IMR-90 (cell line): ENCODE measurements at regions of chr15 and their contacts with region 1.

Region 1: DNA sequence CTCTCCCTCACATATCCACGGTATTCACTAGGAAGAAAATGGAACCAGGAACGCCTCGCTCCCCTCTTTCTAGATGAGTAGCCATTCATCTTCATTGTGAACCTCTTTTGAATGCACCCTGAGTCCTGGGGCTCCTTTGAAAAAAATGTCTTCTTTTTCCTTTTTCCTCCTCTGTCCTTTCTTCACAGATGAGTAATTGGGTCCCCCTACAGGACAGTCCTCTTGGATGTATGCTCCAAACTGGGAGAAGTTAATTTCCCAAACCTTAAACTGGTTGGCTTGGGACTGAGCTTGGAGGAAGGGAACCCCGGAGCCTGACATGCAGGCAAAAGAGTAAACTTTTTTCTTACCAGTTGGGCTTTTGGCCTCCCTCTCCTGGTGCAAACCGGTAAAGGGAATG is 108.8 kb downstream of the DPH6 start:
- DNase-seq: peak; percentile 23
- ATAC-seq: peak; percentile 44
- H3K4me3 ChIP-seq: no peak overlapping the region
- H3K27ac ChIP-seq: no peak overlapping the region
- H3K4me1 ChIP-seq: peaks cover 3% of the 10 kb centered on the region; the same call in 1 of the 2 replicates
- H3K27me3 ChIP-seq: no peaks in the 10 kb centered on the region
- CTCF ChIP-seq: peak; percentile 38
- POLR2A ChIP-seq: no peak
- RAD21 ChIP-seq: peak; percentile 10; the same call in 1 of the 2 replicates

Region 2: DNA sequence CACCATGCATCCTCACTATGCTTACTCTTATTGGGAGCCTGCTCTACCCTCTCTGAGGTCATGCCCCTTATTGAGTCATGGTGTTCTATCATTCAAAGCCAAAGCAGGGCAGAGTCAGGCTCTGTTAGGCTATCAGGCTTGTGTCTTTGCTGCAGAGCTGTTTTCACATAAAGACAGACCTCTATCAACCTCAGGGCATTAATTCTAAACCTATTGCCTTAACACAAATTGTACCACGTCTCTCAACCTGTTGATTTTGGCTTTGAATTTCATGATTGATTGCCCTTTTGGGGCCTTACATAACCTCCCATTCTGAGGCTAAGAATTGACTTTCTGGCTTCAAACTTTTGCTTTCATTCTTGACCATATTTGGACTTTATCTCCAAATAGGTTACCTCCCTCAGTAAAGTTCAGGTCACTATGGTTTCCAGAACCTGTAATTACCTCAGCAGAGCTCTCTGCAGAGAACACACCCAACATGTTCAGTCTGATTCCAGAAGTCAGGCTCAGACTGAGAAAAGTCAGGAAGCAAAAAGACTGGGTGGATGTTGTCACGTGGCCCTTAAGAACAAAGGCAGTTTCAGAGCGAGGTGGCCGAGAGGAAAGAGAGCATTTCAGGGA is 130.7 kb before region 1 on chr15:
- CTCF ChIA-PET with region 1: no interaction called
- POLR2A ChIA-PET with region 1: no interaction called
- dilution Hi-C with region 1: no loop called
- in situ Hi-C with region 1: no loop called
- intact Hi-C with region 1: loop called (anchors 2 kb)
- DNase-seq: peak; percentile 76
- ATAC-seq: peak; percentile 78
- H3K4me3 ChIP-seq: no peak overlapping the region
- H3K27ac ChIP-seq: peak overlapping the region; percentile 91
- H3K4me1 ChIP-seq: peaks cover 16% of the 10 kb centered on the region
- H3K27me3 ChIP-seq: no peaks in the 10 kb centered on the region
- CTCF ChIP-seq: no peak
- POLR2A ChIP-seq: no peak
- RAD21 ChIP-seq: no peak

Region 3: DNA sequence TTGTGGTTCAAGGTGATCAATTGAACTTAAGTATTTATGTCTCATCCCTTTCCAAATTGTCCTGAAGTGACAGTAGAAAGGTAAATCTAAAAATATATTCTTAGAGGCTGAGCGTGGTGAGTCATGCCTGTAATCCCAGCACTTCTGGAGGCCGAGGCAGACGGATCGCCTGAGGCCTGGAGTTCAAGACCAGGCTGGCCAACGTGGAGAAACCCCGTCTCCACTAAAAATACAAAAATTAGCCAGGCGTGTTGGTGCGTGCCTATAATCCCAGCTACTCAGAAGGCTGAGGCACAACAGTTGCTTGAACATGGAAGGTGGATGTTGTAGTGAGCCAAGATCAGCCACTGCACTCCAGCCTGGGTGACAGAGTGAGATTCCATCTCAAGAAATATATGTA is 117.8 kb before region 1 on chr15:
- CTCF ChIA-PET with region 1: no interaction called
- POLR2A ChIA-PET with region 1: no interaction called
- dilution Hi-C with region 1: no loop called
- in situ Hi-C with region 1: no loop called
- intact Hi-C with region 1: no loop called
- DNase-seq: no peak
- ATAC-seq: no peak
- H3K4me3 ChIP-seq: no peak overlapping the region
- H3K27ac ChIP-seq: no peak overlapping the region
- H3K4me1 ChIP-seq: no peaks in the 10 kb centered on the region
- H3K27me3 ChIP-seq: no peaks in the 10 kb centered on the region
- CTCF ChIP-seq: no peak
- POLR2A ChIP-seq: no peak
- RAD21 ChIP-seq: no peak

Region 4: DNA sequence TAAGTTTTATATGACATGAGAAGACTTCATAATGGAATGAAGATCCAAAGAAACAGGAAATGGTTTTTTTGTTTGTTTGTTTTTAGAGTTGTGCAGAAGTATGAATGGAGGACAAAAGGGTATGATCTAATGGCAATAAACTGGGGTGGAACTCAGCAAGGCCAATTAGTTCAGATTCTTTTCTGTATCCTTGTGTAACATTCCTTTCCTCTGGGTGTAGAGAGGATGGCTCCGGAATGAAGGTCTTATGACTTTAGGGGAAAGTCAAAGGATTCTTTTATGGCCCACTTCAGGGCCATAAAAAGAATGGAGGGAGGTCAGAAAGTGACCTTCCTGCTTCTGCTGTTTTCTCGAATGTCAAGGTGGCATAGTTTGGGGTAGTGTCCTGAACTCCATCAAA is 43.8 kb before region 1 on chr15:
- CTCF ChIA-PET with region 1: no interaction called
- POLR2A ChIA-PET with region 1: no interaction called
- dilution Hi-C with region 1: no loop called
- in situ Hi-C with region 1: no loop called
- intact Hi-C with region 1: no loop called
- DNase-seq: no peak
- ATAC-seq: no peak
- H3K4me3 ChIP-seq: no peak overlapping the region
- H3K27ac ChIP-seq: no peak overlapping the region
- H3K4me1 ChIP-seq: peaks cover 2% of the 10 kb centered on the region; the same call in 1 of the 2 replicates
- H3K27me3 ChIP-seq: no peaks in the 10 kb centered on the region
- CTCF ChIP-seq: no peak
- POLR2A ChIP-seq: no peak
- RAD21 ChIP-seq: no peak

Region 5: GRCh38 chr15:35485411-35485810 is 48.3 kb after region 1 on chr15:
- CTCF ChIA-PET with region 1: no interaction called
- POLR2A ChIA-PET with region 1: no interaction called
- dilution Hi-C with region 1: no loop called
- in situ Hi-C with region 1: loop called (anchors 5 kb)
- intact Hi-C with region 1: no loop called
- DNase-seq: no peak
- ATAC-seq: no peak
- H3K4me3 ChIP-seq: no peak overlapping the region
- H3K27ac ChIP-seq: no peak overlapping the region
- H3K4me1 ChIP-seq: peaks cover 2% of the 10 kb centered on the region
- H3K27me3 ChIP-seq: no peaks in the 10 kb centered on the region
- CTCF ChIP-seq: no peak
- POLR2A ChIP-seq: no peak
- RAD21 ChIP-seq: no peak

Region 6: GRCh38 chr15:35858707-35859106 is 421.6 kb after region 1 on chr15:
- CTCF ChIA-PET with region 1: no interaction called
- POLR2A ChIA-PET with region 1: no interaction called
- dilution Hi-C with region 1: no loop called
- in situ Hi-C with region 1: no loop called
- intact Hi-C with region 1: no loop called
- DNase-seq: peak; percentile 5
- ATAC-seq: no peak
- H3K4me3 ChIP-seq: no peak overlapping the region
- H3K27ac ChIP-seq: no peak overlapping the region
- H3K4me1 ChIP-seq: no peaks in the 10 kb centered on the region
- H3K27me3 ChIP-seq: no peaks in the 10 kb centered on the region
- CTCF ChIP-seq: no peak
- POLR2A ChIP-seq: no peak
- RAD21 ChIP-seq: no peak